Right ventricle myocardium inferior (tissue), 1 donor: ENCODE measurements at regions of chr4 and their contacts with region 1.

Region 1: DNA sequence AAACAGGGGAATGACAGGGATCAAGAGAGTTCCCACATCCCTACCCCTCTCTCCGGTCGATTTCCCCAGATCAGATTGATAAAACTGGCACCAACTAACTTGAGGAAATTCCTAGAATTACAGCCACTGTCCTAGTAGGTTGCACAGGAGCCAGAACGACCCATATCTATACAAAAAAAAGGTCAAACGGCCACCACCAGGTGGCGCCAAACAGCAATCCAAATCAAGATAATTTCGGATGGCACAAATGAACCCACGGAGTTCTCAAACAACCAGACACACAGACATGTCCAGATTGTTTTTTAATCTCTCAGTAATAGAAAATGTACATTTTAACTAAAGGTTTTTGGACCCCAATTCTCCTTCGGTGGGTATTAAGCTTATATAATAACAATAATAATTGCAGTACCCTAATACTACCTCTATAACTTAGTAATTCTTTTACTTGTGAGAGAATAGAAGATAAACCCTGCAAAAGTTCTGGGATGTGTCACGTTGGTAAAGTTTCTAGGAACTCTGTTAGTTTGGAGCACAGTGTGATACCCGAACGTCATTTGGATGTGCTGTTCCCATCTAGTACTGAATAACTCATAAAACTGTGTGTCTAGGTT is 212.6 kb downstream of the SPOCK3 start:
- DNase-seq: peak; percentile 65
- ATAC-seq: no peak

Region 2: GRCh38 chr4:166862032-166862431 is 159.6 kb before region 1 on chr4:
- intact Hi-C with region 1: no loop called
- DNase-seq: no peak
- ATAC-seq: no peak

Region 3: DNA sequence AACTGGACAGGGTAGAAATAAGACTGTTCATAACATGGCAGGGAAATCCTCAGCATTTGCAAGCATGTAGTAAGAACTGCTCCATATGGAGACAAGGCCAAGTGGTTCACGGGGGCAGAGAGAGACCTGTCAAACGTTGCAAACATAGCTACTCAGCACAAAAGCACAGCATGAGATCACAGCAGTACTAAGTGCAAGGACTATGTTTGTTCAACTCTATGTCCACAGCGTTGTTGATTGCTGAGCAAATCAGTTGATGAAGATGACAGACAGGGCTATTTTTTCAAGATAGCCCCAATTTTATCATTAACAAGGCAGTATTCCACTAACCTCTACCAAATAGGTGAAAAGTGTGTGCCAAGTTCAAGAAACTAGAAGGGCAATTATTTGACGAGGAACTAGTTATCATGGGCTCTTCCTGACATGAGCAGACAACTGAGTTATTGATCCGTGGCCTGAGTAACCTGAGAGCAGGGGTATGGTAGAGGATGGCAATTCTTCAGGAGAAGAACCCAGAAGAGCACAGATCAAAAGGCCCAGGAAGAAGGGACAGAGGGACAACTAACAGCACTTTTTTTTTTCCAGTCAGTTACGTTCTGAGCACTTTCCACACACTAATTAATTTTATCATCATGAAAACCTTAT is 155.2 kb after region 1 on chr4:
- intact Hi-C with region 1: no loop called
- DNase-seq: no peak
- ATAC-seq: no peak

Region 4: GRCh38 chr4:167290678-167291077 is 269.0 kb after region 1 on chr4:
- intact Hi-C with region 1: loop called (anchors 1 kb)
- DNase-seq: no peak
- ATAC-seq: no peak

Region 5: GRCh38 chr4:168076989-168077725 is 1055.5 kb after region 1 on chr4:
- intact Hi-C with region 1: loop called (anchors 10 kb)
- DNase-seq: no peak
- ATAC-seq: no peak